Mammary epithelial cell (primary cell): ENCODE measurements at regions of chr15 and their contacts with region 1.

Region 1: GRCh38 chr15:98635848-98636247 is 12.5 kb upstream of the IGF1R start:
- DNase-seq: no peak
- H3K4me3 ChIP-seq: no peak overlapping the region
- H3K27ac ChIP-seq: no peak overlapping the region
- H3K4me1 ChIP-seq: no peaks in the 10 kb centered on the region
- H3K27me3 ChIP-seq: peaks cover 2% of the 10 kb centered on the region
- CTCF ChIP-seq: no peak

Region 2: DNA sequence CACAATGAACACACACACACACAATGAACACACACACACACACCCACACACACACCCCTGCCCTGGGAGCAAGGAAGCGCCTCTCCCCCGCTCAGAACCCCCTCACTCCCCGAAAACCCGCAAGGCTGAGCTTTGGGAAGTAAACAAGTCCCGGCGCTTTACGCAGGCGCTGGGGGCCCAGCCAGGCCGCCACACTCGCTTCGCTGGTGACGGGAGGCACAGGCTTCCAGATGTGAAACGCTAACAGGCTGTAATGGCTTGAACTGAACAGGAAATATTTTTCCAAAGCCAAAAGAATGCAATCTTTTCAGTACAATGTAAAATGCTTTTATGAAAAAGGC is 110.2 kb before region 1 on chr15:
- CTCF ChIA-PET with region 1: no interaction called
- dilution Hi-C with region 1: no loop called
- in situ Hi-C with region 1: loop called in 1 of 2 experiments (anchors 10 kb)
- intact Hi-C with region 1: no loop called
- DNase-seq: no peak
- H3K4me3 ChIP-seq: no peak overlapping the region
- H3K27ac ChIP-seq: no peak overlapping the region
- H3K4me1 ChIP-seq: no peaks in the 10 kb centered on the region
- H3K27me3 ChIP-seq: peaks cover 3% of the 10 kb centered on the region
- CTCF ChIP-seq: no peak

Region 3: DNA sequence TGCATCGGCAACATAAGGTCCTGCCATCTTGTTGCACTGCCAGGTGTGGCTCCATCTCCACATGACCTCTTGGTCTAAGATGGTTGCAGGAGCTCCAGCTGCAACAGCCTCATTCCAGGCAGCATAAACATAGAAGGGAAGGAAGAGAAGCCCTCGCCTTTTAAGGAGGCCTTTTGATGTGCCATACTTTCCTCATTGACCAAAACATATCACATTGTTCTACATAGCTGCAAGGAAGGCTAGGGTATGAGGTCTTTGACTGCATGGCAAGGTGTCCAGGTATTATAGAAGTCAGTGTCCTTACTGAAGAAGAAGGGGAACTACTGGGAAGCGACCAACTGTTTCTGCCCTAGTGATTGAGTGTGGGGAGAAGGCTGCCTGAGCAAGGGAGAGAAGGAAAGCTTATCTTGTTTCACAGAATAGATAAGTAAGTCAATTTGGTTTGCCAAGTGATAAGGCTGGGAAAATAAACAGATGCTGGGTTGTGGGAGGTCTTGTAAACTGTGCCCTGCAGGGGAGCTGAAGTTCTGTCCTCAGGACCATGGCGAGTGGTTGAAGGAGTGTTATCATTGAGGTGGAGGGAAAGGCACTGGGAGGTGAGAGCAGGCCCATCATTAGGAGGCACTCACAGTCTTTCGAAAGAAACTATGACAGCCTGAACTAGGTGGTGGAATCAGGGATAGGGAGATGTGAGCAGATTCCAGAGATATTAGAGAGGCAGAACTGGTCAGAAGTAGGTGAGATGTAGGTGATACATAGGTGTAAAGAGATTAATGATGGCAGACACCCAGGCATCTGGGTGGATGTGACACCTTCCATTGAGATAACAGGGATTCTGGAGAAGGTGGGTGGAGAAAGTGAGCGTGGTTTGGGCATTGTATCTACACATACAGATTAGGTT is 81.3 kb before region 1 on chr15:
- CTCF ChIA-PET with region 1: no interaction called
- dilution Hi-C with region 1: loop called (anchors 5 kb)
- in situ Hi-C with region 1: no loop called
- intact Hi-C with region 1: no loop called
- DNase-seq: no peak
- H3K4me3 ChIP-seq: no peak overlapping the region
- H3K27ac ChIP-seq: no peak overlapping the region
- H3K4me1 ChIP-seq: peaks cover under 1% of the 10 kb centered on the region
- H3K27me3 ChIP-seq: no peaks in the 10 kb centered on the region
- CTCF ChIP-seq: no peak

Region 4: GRCh38 chr15:98647774-98648653 is 12.2 kb after region 1 on chr15 and contains the start of gene IGF1R:
- CTCF ChIA-PET with region 1: no interaction called
- dilution Hi-C with region 1: no loop called
- in situ Hi-C with region 1: no loop called
- intact Hi-C with region 1: no loop called
- DNase-seq: peak; percentile 89
- H3K4me3 ChIP-seq: peak within 1 kb of the TSS; percentile 89 to 100 (median 98)
- H3K27ac ChIP-seq: peak within 1 kb of the TSS; percentile 91
- H3K4me1 ChIP-seq: peaks cover 13% of the 10 kb centered on the region
- H3K27me3 ChIP-seq: no peaks in the 10 kb centered on the region
- CTCF ChIP-seq: peak in 1 of 2 donors; percentile 4
- total RNA-seq, gene IGF1R: 42.3 to 60.3 TPM

Region 5: GRCh38 chr15:98668566-98669308 is 32.9 kb after region 1 on chr15:
- CTCF ChIA-PET with region 1: no interaction called
- dilution Hi-C with region 1: no loop called
- in situ Hi-C with region 1: no loop called
- intact Hi-C with region 1: no loop called
- DNase-seq: peak; percentile 93
- H3K4me3 ChIP-seq: no peak overlapping the region
- H3K27ac ChIP-seq: peak overlapping the region; percentile 95
- H3K4me1 ChIP-seq: peaks cover 57% of the 10 kb centered on the region
- H3K27me3 ChIP-seq: no peaks in the 10 kb centered on the region
- CTCF ChIP-seq: no peak